ENCODE measurements at regions of chr10 and their contacts with region 1.

Region 1: GRCh38 chr10:129888784-129889616 is 75.1 kb downstream of the EBF3 start:
- DNase-seq: peak in 3 of 5 donors; percentile 5 to 58 (median 14)
- H3K4me3 ChIP-seq: no peak overlapping the region
- H3K4me3 Mint-ChIP-seq: no peak overlapping the region
- H3K27ac ChIP-seq: no peak overlapping the region
- H3K27ac Mint-ChIP-seq: no peak overlapping the region
- H3K4me1 ChIP-seq: no peaks in the 10 kb centered on the region
- H3K4me1 Mint-ChIP-seq: no peaks in the 10 kb centered on the region
- H3K27me3 ChIP-seq: no peaks in the 10 kb centered on the region
- H3K27me3 Mint-ChIP-seq: no peaks in the 10 kb centered on the region

Region 2: GRCh38 chr10:129845111-129845753 is 43.8 kb before region 1 on chr10:
- CTCF ChIA-PET with region 1: no interaction called
- POLR2A ChIA-PET with region 1: no interaction called
- DNase-seq: no peak
- H3K4me3 ChIP-seq: no peak overlapping the region
- H3K4me3 Mint-ChIP-seq: no peak overlapping the region
- H3K27ac ChIP-seq: no peak overlapping the region
- H3K27ac Mint-ChIP-seq: no peak overlapping the region
- H3K4me1 ChIP-seq: no peaks in the 10 kb centered on the region
- H3K4me1 Mint-ChIP-seq: no peaks in the 10 kb centered on the region
- H3K27me3 ChIP-seq: no peaks in the 10 kb centered on the region
- H3K27me3 Mint-ChIP-seq: peaks cover 2 to 3% of the 10 kb centered on the region in 2 donors

Region 3: GRCh38 chr10:130127364-130128061 is 238.5 kb after region 1 on chr10:
- CTCF ChIA-PET with region 1: interaction called, 10 read pairs
- POLR2A ChIA-PET with region 1: no interaction called
- DNase-seq: peak; percentile 36 to 68 (median 47)
- H3K4me3 ChIP-seq: no peak overlapping the region
- H3K4me3 Mint-ChIP-seq: peak overlapping the region in 1 of 7 donors; percentile 48
- H3K27ac ChIP-seq: no peak overlapping the region
- H3K27ac Mint-ChIP-seq: peak overlapping the region in 2 of 8 donors; percentile 10 to 13
- H3K4me1 ChIP-seq: peaks cover 4% of the 10 kb centered on the region
- H3K4me1 Mint-ChIP-seq: peaks cover 6 to 10% (median 6%) of the 10 kb centered on the region in 3 donors
- H3K27me3 ChIP-seq: peaks cover 7% of the 10 kb centered on the region
- H3K27me3 Mint-ChIP-seq: peaks cover 19 to 41% of the 10 kb centered on the region in 2 donors

Measured in CD8-positive, alpha-beta memory T cell (primary cell).